Transverse colon (tissue), 4 donors: ENCODE measurements at regions of chr2 and their contacts with region 1.

Region 1: DNA sequence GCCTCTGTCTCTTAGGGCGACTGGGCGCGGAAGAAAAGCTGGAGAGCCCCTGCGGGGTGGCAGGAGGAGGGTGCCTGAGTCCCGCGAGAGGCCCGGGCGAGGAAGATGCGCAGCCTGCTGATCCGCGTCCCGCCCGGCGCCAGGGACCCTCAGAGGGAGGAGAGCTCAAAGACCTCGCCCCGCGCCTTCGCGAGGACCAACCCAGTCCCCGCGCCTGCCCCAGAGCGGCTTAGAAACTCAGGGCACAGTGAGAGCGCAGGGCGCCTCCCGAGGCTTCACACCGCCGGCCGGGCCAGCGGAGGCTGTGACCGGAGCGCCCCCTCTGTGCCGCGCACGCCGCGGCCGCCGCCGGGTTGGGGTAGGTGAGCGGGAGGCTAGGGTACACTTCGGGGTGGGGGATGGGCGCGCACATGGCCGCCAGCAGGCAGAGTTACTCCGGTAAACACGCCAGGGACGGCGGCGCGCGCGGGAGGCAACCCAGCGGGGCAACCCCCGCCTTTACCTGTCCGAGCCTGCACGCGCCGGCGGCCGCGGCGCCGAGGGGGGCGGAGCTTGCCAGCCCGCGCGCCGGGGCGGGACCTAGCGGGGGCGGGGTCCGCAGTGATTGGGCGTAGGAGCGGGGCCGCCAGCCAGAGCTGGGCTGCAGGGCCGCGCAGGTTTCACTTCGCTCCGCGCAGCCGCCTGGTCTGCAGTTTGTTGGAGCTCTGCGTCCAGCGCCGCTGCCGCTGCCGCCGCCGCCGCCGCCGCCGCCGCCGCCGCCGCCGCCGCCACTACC is at the start of gene BCL2L11:
- DNase-seq: peak; percentile 96
- H3K4me3 ChIP-seq: peak within 1 kb of the TSS; percentile 60 to 73 (median 70)
- H3K27ac ChIP-seq: peak within 1 kb of the TSS; percentile 85 to 90 (median 88)
- H3K4me1 ChIP-seq: peaks cover 11 to 59% (median 47%) of the 10 kb centered on the region in 4 donors
- H3K27me3 ChIP-seq: peaks cover 39% of the 10 kb centered on the region
- CTCF ChIP-seq: peak in 1 of 5 experiments; percentile 13
- EP300 ChIP-seq: peak; percentile 15
- POLR2A ChIP-seq: peak; percentile 64
- total RNA-seq, gene BCL2L11: 8.8 to 41.8 (median 36.1) TPM

Region 2: DNA sequence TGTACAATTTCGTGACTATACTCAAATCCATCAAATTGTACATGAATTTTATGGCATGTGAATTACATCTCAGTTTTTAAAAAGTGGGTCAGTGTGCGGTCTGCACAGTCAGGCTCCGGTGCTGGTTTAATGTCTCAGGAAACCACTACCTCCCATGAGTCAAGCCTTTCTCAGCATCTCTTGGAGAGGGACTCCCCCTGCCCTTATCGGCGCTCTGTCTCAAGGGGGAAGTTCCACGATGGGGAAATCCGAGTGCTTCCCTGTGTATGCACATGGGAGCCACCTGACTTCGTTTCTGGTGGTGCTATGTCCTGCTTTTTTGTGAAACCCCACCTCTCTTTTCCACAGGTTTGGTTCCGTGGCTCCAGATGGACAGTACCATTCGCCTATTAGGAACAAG is 315.5 kb before region 1 on chr2:
- in situ Hi-C with region 1: loop called in 3 of 4 experiments (anchors 10 to 25 kb)
- intact Hi-C with region 1: no loop called
- DNase-seq: no peak
- H3K4me3 ChIP-seq: no peak overlapping the region
- H3K27ac ChIP-seq: no peak overlapping the region
- H3K4me1 ChIP-seq: no peaks in the 10 kb centered on the region
- H3K27me3 ChIP-seq: no peaks in the 10 kb centered on the region
- CTCF ChIP-seq: no peak
- EP300 ChIP-seq: no peak
- POLR2A ChIP-seq: no peak

Region 3: DNA sequence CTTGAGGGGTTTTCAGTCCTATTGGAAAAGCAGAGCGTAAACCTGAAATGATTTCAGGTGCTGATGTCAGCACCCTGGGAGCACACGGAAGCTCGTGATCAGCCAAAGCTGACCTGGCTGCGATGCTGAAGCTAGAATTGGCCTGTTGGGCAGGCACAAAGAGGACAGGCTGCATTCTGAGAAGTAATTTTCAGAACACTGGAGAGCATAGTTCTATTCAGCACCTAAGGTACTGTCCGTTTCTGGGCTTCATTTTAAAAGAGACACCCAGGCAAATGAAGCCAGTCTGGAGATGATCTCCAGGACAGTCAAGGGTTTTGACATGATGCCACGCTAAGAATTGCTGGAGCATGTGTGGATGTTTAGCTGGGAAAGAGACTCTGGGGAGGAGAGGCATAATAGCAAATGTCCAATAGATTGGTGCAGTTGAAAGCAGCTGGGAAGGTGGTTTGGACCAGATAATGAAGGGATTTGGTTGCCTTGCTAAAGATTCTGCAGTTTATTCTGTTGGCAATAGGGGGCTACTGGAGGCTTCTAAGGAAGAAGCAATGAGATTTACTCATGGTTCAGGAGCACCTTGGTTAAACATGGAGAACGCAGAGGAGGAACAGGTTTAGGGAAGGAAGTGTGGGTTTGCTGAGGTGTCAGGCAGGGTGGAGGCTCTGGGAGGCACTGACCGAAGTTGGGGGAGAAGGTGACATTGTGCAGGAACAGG is 301.5 kb before region 1 on chr2:
- in situ Hi-C with region 1: loop called in 3 of 4 experiments (anchors 10 to 25 kb)
- intact Hi-C with region 1: no loop called
- DNase-seq: no peak
- H3K4me3 ChIP-seq: no peak overlapping the region
- H3K27ac ChIP-seq: no peak overlapping the region
- H3K4me1 ChIP-seq: no peaks in the 10 kb centered on the region
- H3K27me3 ChIP-seq: no peaks in the 10 kb centered on the region
- CTCF ChIP-seq: no peak
- EP300 ChIP-seq: no peak
- POLR2A ChIP-seq: no peak

Region 4: DNA sequence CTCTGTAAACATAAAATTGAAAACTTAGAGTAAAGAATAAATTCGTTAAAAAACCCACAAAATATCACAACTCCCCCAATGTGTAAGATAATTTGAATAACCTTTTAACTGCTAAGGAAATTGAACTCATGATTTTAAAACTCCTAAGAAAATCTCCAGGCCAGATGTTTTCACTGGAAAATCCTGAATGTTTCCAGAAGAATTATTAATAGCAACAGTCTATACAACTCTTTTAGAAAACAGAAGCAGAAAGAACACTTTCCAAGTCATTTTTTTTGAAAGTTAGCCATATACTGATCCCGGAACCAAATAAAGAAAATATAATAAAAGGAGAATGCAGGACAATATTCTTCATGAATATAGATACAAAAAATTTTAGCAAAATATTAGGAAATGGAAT is 222.5 kb before region 1 on chr2:
- in situ Hi-C with region 1: no loop called
- intact Hi-C with region 1: no loop called
- DNase-seq: no peak
- H3K4me3 ChIP-seq: peak overlapping the region in 1 of 4 donors; percentile 7
- H3K27ac ChIP-seq: no peak overlapping the region
- H3K4me1 ChIP-seq: peaks cover 0 to 6% (median 3%) of the 10 kb centered on the region in 4 donors
- H3K27me3 ChIP-seq: no peaks in the 10 kb centered on the region
- CTCF ChIP-seq: no peak
- EP300 ChIP-seq: no peak
- POLR2A ChIP-seq: no peak

Region 5: GRCh38 chr2:111698743-111699554 is 578.5 kb after region 1 on chr2:
- in situ Hi-C with region 1: loop called in 2 of 4 experiments (anchors 25 kb)
- intact Hi-C with region 1: no loop called
- DNase-seq: peak; percentile 89
- H3K4me3 ChIP-seq: no peak overlapping the region
- H3K27ac ChIP-seq: peak overlapping the region; percentile 73 to 81 (median 81)
- H3K4me1 ChIP-seq: peaks cover 0 to 41% (median 25%) of the 10 kb centered on the region in 4 donors
- H3K27me3 ChIP-seq: no peaks in the 10 kb centered on the region
- CTCF ChIP-seq: peak in 3 of 5 experiments; percentile 13 to 46 (median 24)
- EP300 ChIP-seq: no peak
- POLR2A ChIP-seq: peak; percentile 11

Region 6: DNA sequence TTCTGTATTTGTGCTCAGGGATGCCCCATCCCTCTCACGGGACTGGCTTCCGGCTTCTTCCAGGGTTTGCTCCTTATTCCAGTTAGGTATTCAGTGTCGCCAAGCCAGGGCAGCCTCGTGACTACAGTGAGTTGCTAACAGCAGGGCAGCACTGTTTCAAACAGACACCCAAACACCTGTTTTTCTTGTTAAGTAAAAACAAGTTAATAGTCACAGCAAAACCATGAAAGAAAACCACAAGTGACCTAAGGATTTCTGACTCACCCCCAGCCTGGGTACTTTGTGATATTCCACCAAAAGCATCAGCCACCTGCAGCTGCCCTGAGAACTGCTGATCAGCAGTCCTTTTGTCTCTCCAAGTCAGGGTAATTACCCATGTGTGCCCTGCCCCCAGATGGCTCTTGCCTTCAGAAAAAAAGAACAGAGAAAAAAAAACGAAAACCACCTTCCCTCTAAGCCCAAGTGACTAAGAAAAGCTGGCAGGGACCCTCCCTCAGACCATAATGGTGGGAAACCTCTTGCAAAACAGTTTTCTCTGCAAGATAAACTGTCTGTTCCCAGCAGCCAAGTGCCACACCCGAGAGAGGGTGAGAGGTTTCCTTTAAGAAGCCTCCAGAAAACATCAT is 585.4 kb after region 1 on chr2:
- in situ Hi-C with region 1: loop called in 1 of 4 experiments (anchors 25 kb)
- intact Hi-C with region 1: no loop called
- DNase-seq: peak; percentile 54
- H3K4me3 ChIP-seq: no peak overlapping the region
- H3K27ac ChIP-seq: peak overlapping the region in 2 of 4 donors; percentile 53 to 62
- H3K4me1 ChIP-seq: peaks cover 0 to 23% (median 4%) of the 10 kb centered on the region in 4 donors
- H3K27me3 ChIP-seq: no peaks in the 10 kb centered on the region
- CTCF ChIP-seq: no peak
- EP300 ChIP-seq: no peak
- POLR2A ChIP-seq: no peak